K562 (cell line): ENCODE measurements at regions of chr1 and their contacts with region 1.

Region 1: DNA sequence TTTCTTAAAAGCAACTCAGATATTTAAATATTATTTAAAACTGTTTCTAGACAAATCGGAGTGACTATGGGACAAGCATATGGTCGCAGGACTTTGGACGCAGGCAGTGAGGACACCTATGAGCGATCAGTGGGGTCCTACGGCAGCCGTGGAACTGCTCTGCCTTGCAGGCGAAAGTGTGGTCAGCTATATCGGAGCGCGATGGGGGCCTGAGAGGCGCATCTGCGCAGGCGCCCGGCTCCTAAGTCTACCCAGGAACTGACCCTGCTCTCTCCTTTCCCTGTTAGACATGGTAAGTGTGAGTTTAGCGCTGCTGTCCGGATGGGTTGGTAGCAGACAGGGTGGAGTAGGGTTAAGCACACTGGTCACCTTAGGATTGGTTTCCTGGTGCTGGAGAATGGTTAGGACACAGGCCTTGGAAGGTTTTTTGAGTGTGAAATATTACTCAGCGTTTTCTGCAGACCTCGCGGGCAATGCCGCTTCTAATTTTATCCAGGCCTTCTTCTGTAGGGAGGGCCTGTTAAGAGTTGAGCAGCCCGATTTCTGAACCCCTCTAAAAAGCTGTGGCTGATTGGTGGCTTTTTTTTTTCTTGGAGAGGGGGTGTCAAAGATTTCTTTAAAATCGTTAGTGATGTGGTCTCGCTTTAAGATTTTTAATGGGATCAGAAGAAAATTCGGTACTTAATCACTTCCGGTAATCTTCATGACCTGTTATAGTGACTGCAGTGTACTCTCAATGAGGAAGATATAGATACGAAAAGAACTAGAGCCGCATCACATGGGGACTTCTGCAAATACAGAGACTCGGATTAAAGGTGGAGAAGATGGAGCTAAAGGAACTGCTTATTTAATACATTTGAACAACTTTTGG is at the start of gene RABGGTB:
- DNase-seq: peak; percentile 90 to 98 (median 92)
- ATAC-seq: peak; percentile 82
- H3K4me3 ChIP-seq: peak within 1 kb of the TSS; percentile 63
- H3K27ac ChIP-seq: peak within 1 kb of the TSS; percentile 95
- H3K4me1 ChIP-seq: peaks cover 0 to 5% of the 10 kb centered on the region in 2 experiments; a peak in 1 of 5 replicates
- H3K27me3 ChIP-seq: no peaks in the 10 kb centered on the region
- CTCF ChIP-seq: peak in 1 of 3 experiments; percentile 6; a peak in 1 of 6 replicates
- EP300 ChIP-seq: no peak
- POLR2A ChIP-seq: peak; percentile 99
- RAD21 ChIP-seq: 0 out of 4 replicates have a peak, but pooled peaks of 1 of the 2 experiments have one; percentile 6
- polyA plus RNA-seq, gene RABGGTB: 177 to 180 TPM

Region 2: DNA sequence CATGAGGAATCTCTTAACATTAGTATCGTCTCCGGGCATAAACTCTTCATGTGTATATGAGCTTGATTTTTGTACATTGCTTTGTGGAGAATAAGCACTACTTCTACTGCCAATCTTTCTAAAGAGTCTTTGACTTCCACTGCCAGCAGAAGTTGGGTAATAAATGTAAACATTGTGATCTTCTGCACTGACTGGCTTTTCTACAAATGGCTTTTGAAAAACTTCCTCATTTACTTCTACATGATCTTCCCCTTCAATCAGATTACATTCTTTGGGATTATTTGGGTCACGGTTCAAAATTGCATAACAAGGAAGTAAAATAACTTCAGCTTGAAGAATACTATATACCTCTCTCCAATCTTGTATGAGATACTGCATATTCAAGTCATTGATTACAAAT is 144.9 kb before region 1 on chr1:
- CTCF ChIA-PET with region 1: no interaction called
- POLR2A ChIA-PET with region 1: no interaction called
- in situ Hi-C with region 1: no loop called
- intact Hi-C with region 1: loop called (anchors 2 kb)
- DNase-seq: no peak
- ATAC-seq: no peak
- H3K4me3 ChIP-seq: no peak overlapping the region
- H3K27ac ChIP-seq: no peak overlapping the region
- H3K4me1 ChIP-seq: peaks cover 0 to 5% of the 10 kb centered on the region in 2 experiments; a peak in 2 of 5 replicates
- H3K27me3 ChIP-seq: no peaks in the 10 kb centered on the region
- CTCF ChIP-seq: no peak
- EP300 ChIP-seq: no peak
- POLR2A ChIP-seq: no peak
- RAD21 ChIP-seq: no peak

Region 3: DNA sequence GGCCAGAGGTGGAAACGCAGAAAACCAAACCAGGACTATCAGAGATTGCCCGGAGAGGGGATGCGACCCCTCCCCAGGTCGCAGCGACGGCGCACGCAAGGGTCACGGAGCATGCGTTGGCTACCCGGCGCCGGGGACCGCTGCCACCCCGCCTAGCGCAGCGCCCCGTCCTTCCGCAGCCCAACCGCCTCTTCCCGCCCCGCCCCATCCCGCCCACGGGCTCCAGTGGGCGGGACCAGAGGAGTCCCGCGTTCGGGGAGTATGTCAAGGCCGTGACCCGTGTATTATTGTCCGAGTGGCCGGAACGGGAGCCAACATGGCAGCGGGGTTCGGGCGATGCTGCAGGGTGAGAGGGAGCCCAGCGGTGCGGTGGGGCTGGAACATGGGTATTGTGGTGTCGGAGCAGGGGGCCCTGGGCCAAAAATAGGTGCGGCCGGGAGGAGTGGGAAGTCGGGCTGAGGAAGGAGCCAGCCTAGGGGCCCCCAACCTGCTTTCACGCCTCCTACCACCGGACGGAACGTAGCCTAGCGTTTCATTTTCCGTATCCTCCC is 61.7 kb before region 1 on chr1 and contains the start of gene ACADM:
- CTCF ChIA-PET with region 1: no interaction called
- POLR2A ChIA-PET with region 1: interaction called, 6 read pairs
- in situ Hi-C with region 1: loop called (anchors 5 kb)
- intact Hi-C with region 1: loop called (anchors 1 kb)
- DNase-seq: peak; percentile 92 to 96 (median 92)
- ATAC-seq: peak; percentile 86
- H3K4me3 ChIP-seq: peak within 1 kb of the TSS; percentile 77
- H3K27ac ChIP-seq: peak within 1 kb of the TSS; percentile 95
- H3K4me1 ChIP-seq: peaks cover 0 to 10% of the 10 kb centered on the region in 2 experiments; a peak in 3 of 5 replicates
- H3K27me3 ChIP-seq: no peaks in the 10 kb centered on the region
- CTCF ChIP-seq: no peak; a peak in 1 of 6 replicates
- EP300 ChIP-seq: peak; percentile 48; the same call in 1 of the 2 replicates
- POLR2A ChIP-seq: peak; percentile 95
- RAD21 ChIP-seq: no peak
- polyA plus RNA-seq, gene ACADM: 103 to 119 TPM

Region 4: GRCh38 chr1:75796376-75797272 is 10.4 kb after region 1 on chr1 and contains the start of gene MSH4:
- CTCF ChIA-PET with region 1: no interaction called
- POLR2A ChIA-PET with region 1: interaction called, 32 read pairs
- in situ Hi-C with region 1: no loop called
- intact Hi-C with region 1: no loop called
- DNase-seq: peak; percentile 30 to 82 (median 38)
- ATAC-seq: peak; percentile 75
- H3K4me3 ChIP-seq: peak within 1 kb of the TSS; percentile 9; the same call in 1 of the 2 replicates
- H3K27ac ChIP-seq: 0 out of 3 replicates have a peak within 1 kb of the TSS, but pooled peaks have one; percentile 10
- H3K4me1 ChIP-seq: peaks cover 11% of the 10 kb centered on the region in 2 experiments; a peak in 4 of 5 replicates
- H3K27me3 ChIP-seq: no peaks in the 10 kb centered on the region
- CTCF ChIP-seq: no peak
- EP300 ChIP-seq: no peak
- POLR2A ChIP-seq: peak; percentile 95
- RAD21 ChIP-seq: peak in 1 of 2 experiments; percentile 1; a peak in 2 of 4 replicates
- polyA plus RNA-seq, gene MSH4: not detected